HCT116 (cell line): ENCODE measurements at regions of chr1 and their contacts with region 1.

Region 1: DNA sequence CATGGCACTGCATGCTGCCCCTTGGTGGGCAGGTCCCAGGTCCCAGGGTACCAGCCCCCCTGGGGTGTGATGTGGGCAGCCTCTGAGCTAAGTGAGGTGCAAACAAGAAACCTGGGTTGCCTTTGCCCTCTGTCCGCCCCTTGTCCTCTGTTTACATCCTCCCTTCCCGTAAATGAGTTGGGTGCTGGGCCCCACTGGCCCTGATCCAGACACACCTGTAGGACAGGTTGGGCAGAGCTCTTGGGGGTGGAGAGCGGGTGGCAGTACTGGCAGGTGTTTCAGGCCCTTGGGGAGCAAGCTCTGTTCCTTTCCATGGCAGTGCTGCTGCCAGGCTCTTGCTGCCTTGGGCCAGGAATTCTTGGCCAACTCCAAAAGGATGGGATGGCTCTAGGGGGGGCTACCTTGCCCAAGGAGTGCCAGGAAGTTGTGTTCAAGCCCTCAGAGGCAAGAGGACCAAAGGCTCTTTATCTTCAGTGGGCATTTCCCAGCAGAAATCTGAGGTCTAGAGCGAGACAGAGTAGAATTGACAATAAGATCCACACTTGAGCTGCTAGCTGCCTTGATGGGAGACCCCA is 35.9 kb downstream of the ELF3 start:
- DNase-seq: no peak
- ATAC-seq: peak; percentile 39
- H3K4me3 ChIP-seq: peak overlapping the region in 1 of 2 experiments; percentile 15; a peak in 1 of 4 replicates
- H3K27ac ChIP-seq: peak overlapping the region; percentile 63
- H3K4me1 ChIP-seq: peaks cover 47 to 79% of the 10 kb centered on the region in 2 experiments
- H3K27me3 ChIP-seq: no peaks in the 10 kb centered on the region
- CTCF ChIP-seq: no peak
- POLR2A ChIP-seq: no peak
- RAD21 ChIP-seq: peak; percentile 11; the same call in 1 of the 2 replicates

Region 2: GRCh38 chr1:202034683-202035462 is 11.4 kb before region 1 on chr1:
- CTCF ChIA-PET with region 1: interaction called, 3 read pairs
- POLR2A ChIA-PET with region 1: interaction called, 20 read pairs
- RAD21 ChIA-PET with region 1: no interaction called
- intact Hi-C with region 1: no loop called
- DNase-seq: peak; percentile 91
- ATAC-seq: peak; percentile 93
- H3K4me3 ChIP-seq: peak overlapping the region; percentile 20 to 44; a peak in 3 of 4 replicates
- H3K27ac ChIP-seq: peak overlapping the region; percentile 93
- H3K4me1 ChIP-seq: peaks cover 44 to 63% of the 10 kb centered on the region in 2 experiments
- H3K27me3 ChIP-seq: no peaks in the 10 kb centered on the region
- CTCF ChIP-seq: no peak
- POLR2A ChIP-seq: no peak
- RAD21 ChIP-seq: peak; percentile 24; the same call in 1 of the 2 replicates